ENCODE measurements at regions of chr15 and their contacts with region 1.

Region 1: DNA sequence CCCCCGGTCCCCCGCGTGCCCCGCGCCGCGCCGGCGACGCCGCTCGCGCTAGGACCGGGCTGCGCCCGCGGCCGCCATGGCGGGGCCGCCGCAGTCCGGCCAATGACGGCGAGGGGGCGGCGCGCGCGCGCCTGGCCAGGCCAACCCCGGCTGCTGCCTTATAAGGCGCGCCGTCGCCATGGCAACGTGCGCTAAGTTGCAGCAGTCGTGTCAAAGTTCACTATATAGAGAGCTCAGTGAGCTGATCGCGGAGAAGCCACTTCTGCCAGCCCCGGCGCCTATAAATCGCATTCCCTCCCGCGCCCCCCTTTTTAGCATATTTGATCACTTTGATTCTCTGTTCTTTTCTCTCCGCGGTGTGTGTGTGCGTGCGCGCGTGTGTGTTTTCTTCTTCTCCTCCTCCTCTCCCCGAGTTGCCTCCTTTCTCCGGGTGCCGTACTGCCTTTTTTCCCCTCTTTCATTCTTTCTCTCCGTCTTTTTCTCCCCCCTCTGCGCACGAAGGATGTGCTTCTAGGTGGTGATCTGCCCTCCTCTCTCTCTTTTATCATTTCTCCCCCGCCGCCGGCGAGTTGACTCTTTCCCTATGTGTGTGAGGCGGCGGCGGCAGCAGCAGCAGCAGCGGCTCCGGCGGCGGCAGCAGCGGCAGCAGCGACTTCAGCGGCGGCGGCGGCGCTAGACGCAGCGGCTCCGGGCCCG is at the start of gene NR2F2:
- DNase-seq: peak; percentile 99
- ATAC-seq: peak; percentile 78
- H3K4me3 ChIP-seq: peak within 1 kb of the TSS; percentile 84
- H3K27ac ChIP-seq: peak within 1 kb of the TSS; percentile 98
- H3K4me1 ChIP-seq: peaks cover 3% of the 10 kb centered on the region
- H3K27me3 ChIP-seq: no peaks in the 10 kb centered on the region
- CTCF ChIP-seq: no peak
- POLR2A ChIP-seq: peak; percentile 88
- RAD21 ChIP-seq: no peak; the same call in 1 of the 2 replicates
- total RNA-seq, gene NR2F2: 20.3 and 28.1 TPM in 2 replicates

Region 2: GRCh38 chr15:95284933-95285421 is 1045.6 kb before region 1 on chr15:
- CTCF ChIA-PET with region 1: no interaction called
- POLR2A ChIA-PET with region 1: no interaction called
- dilution Hi-C with region 1: no loop called
- in situ Hi-C with region 1: loop called (anchors 10 kb)
- intact Hi-C with region 1: loop called (anchors 1 kb)
- DNase-seq: peak; percentile 70
- ATAC-seq: peak; percentile 24
- H3K4me3 ChIP-seq: no peak overlapping the region
- H3K27ac ChIP-seq: peak overlapping the region; percentile 49; the same call in 1 of the 2 replicates
- H3K4me1 ChIP-seq: peaks cover 15% of the 10 kb centered on the region
- H3K27me3 ChIP-seq: no peaks in the 10 kb centered on the region
- CTCF ChIP-seq: peak; percentile 33
- POLR2A ChIP-seq: no peak
- RAD21 ChIP-seq: peak; percentile 41

Region 3: DNA sequence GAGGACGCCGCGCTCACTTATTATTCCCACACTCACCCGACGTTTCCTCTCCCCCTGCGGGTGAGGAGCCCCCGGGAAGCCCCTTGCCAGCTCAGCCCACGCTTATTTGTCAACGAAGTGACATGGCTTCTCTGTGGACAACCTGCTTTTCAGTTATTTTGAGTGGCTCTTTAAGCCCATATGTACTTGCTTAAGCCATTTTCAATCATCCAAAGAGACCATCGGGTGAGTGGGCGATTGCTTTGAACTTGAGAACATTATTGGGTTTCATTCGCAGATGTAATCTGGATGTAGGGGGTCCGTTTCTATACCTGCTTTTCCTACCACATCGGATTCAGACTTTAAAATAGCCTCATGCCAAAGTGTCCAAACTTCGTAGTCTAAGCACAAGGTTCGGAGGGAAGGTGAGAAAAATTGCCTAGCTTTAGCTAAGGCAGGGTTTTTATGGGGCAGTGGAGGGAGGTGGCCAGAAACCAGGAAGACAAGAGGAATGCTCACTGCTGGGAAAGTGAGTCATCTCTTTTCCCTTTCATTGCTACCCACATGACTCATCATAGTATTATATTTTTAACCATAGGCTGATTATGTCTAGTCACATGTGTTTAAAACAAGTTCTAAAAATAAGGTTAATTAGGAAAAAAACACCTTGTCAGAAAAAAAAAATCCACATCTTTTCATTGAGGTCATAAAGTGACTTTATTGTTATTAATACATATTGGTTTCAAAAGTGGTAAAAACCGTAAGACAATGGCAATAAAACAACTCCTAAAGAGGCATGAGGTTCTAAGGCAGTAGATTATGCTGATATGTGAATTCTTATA is 773.2 kb before region 1 on chr15:
- CTCF ChIA-PET with region 1: no interaction called
- POLR2A ChIA-PET with region 1: no interaction called
- dilution Hi-C with region 1: no loop called
- in situ Hi-C with region 1: loop called (anchors 25 kb)
- intact Hi-C with region 1: loop called (anchors 5 kb)
- DNase-seq: peak; percentile 95
- ATAC-seq: peak; percentile 83
- H3K4me3 ChIP-seq: no peak overlapping the region
- H3K27ac ChIP-seq: peak overlapping the region; percentile 70
- H3K4me1 ChIP-seq: peaks cover 13% of the 10 kb centered on the region
- H3K27me3 ChIP-seq: no peaks in the 10 kb centered on the region
- CTCF ChIP-seq: no peak
- POLR2A ChIP-seq: 0 out of 2 replicates have a peak, but pooled peaks have one; percentile 24
- RAD21 ChIP-seq: no peak

Region 4: GRCh38 chr15:95857124-95857757 is 473.4 kb before region 1 on chr15:
- CTCF ChIA-PET with region 1: interaction called, 3 read pairs
- POLR2A ChIA-PET with region 1: no interaction called
- dilution Hi-C with region 1: no loop called
- in situ Hi-C with region 1: no loop called
- intact Hi-C with region 1: loop called (anchors 10 kb)
- DNase-seq: peak; percentile 90
- ATAC-seq: peak; percentile 93
- H3K4me3 ChIP-seq: no peak overlapping the region
- H3K27ac ChIP-seq: no peak overlapping the region
- H3K4me1 ChIP-seq: peaks cover 3% of the 10 kb centered on the region; the same call in 1 of the 2 replicates
- H3K27me3 ChIP-seq: no peaks in the 10 kb centered on the region
- CTCF ChIP-seq: no peak
- POLR2A ChIP-seq: no peak
- RAD21 ChIP-seq: no peak

Region 5: GRCh38 chr15:95988351-95988805 is 342.2 kb before region 1 on chr15:
- CTCF ChIA-PET with region 1: no interaction called
- POLR2A ChIA-PET with region 1: no interaction called
- dilution Hi-C with region 1: no loop called
- in situ Hi-C with region 1: no loop called
- intact Hi-C with region 1: loop called (anchors 5 kb)
- DNase-seq: peak; percentile 50
- ATAC-seq: peak; percentile 79
- H3K4me3 ChIP-seq: no peak overlapping the region
- H3K27ac ChIP-seq: peak overlapping the region; percentile 68; the same call in 1 of the 2 replicates
- H3K4me1 ChIP-seq: peaks cover 5% of the 10 kb centered on the region
- H3K27me3 ChIP-seq: no peaks in the 10 kb centered on the region; the same call in 1 of the 2 replicates
- CTCF ChIP-seq: no peak
- POLR2A ChIP-seq: no peak
- RAD21 ChIP-seq: no peak

Region 6: GRCh38 chr15:96115642-96116041 is 215.0 kb before region 1 on chr15:
- CTCF ChIA-PET with region 1: no interaction called
- POLR2A ChIA-PET with region 1: no interaction called
- dilution Hi-C with region 1: no loop called
- in situ Hi-C with region 1: no loop called
- intact Hi-C with region 1: no loop called
- DNase-seq: peak; percentile 75
- ATAC-seq: peak; percentile 98
- H3K4me3 ChIP-seq: no peak overlapping the region
- H3K27ac ChIP-seq: no peak overlapping the region
- H3K4me1 ChIP-seq: no peaks in the 10 kb centered on the region
- H3K27me3 ChIP-seq: no peaks in the 10 kb centered on the region
- CTCF ChIP-seq: no peak
- POLR2A ChIP-seq: no peak
- RAD21 ChIP-seq: no peak

Region 7: GRCh38 chr15:96181873-96182301 is 148.7 kb before region 1 on chr15:
- CTCF ChIA-PET with region 1: no interaction called
- POLR2A ChIA-PET with region 1: no interaction called
- dilution Hi-C with region 1: no loop called
- in situ Hi-C with region 1: no loop called
- intact Hi-C with region 1: loop called (anchors 5 kb)
- DNase-seq: peak; percentile 88
- ATAC-seq: peak; percentile 80
- H3K4me3 ChIP-seq: no peak overlapping the region
- H3K27ac ChIP-seq: peak overlapping the region; percentile 80; the same call in 1 of the 2 replicates
- H3K4me1 ChIP-seq: peaks cover 8% of the 10 kb centered on the region
- H3K27me3 ChIP-seq: no peaks in the 10 kb centered on the region
- CTCF ChIP-seq: no peak
- POLR2A ChIP-seq: no peak
- RAD21 ChIP-seq: no peak

Region 8: DNA sequence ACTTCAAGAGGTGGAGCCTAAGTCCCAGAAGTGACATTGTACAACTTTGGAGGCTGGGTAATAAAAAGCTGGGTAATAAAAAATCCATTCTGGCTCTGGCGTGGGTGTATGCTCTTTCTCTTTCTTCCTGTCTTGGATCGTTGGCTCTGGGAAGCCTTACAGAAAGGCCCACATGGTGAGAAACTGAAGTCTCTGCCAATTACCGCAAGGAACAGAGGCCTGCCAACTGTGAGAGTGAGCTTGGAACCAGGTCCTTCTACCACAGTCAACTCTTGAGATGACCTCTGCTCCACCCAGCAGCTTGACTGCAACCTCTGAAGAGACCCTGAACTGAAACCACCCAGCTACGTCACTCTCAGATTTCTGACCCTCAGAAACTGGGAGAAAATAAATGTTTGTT is 50.9 kb after region 1 on chr15:
- CTCF ChIA-PET with region 1: no interaction called
- POLR2A ChIA-PET with region 1: no interaction called
- dilution Hi-C with region 1: no loop called
- in situ Hi-C with region 1: no loop called
- intact Hi-C with region 1: no loop called
- DNase-seq: no peak
- ATAC-seq: no peak
- H3K4me3 ChIP-seq: no peak overlapping the region
- H3K27ac ChIP-seq: no peak overlapping the region
- H3K4me1 ChIP-seq: no peaks in the 10 kb centered on the region
- H3K27me3 ChIP-seq: no peaks in the 10 kb centered on the region; the same call in 1 of the 2 replicates
- CTCF ChIP-seq: no peak
- POLR2A ChIP-seq: no peak
- RAD21 ChIP-seq: no peak

Region 9: GRCh38 chr15:96416934-96417759 is 86.5 kb after region 1 on chr15:
- CTCF ChIA-PET with region 1: no interaction called
- POLR2A ChIA-PET with region 1: no interaction called
- dilution Hi-C with region 1: no loop called
- in situ Hi-C with region 1: no loop called
- intact Hi-C with region 1: no loop called
- DNase-seq: peak; percentile 4
- ATAC-seq: peak; percentile 44
- H3K4me3 ChIP-seq: peak overlapping the region; percentile 30
- H3K27ac ChIP-seq: no peak overlapping the region
- H3K4me1 ChIP-seq: peaks cover 2% of the 10 kb centered on the region; the same call in 1 of the 2 replicates
- H3K27me3 ChIP-seq: peaks cover 86% of the 10 kb centered on the region
- CTCF ChIP-seq: no peak
- POLR2A ChIP-seq: no peak
- RAD21 ChIP-seq: no peak

Region 10: GRCh38 chr15:96544162-96544756 is 213.7 kb after region 1 on chr15:
- CTCF ChIA-PET with region 1: no interaction called
- POLR2A ChIA-PET with region 1: no interaction called
- dilution Hi-C with region 1: no loop called
- in situ Hi-C with region 1: no loop called
- intact Hi-C with region 1: no loop called
- DNase-seq: no peak
- ATAC-seq: no peak
- H3K4me3 ChIP-seq: no peak overlapping the region
- H3K27ac ChIP-seq: no peak overlapping the region
- H3K4me1 ChIP-seq: no peaks in the 10 kb centered on the region
- H3K27me3 ChIP-seq: no peaks in the 10 kb centered on the region
- CTCF ChIP-seq: no peak
- POLR2A ChIP-seq: no peak
- RAD21 ChIP-seq: no peak

Region 11: DNA sequence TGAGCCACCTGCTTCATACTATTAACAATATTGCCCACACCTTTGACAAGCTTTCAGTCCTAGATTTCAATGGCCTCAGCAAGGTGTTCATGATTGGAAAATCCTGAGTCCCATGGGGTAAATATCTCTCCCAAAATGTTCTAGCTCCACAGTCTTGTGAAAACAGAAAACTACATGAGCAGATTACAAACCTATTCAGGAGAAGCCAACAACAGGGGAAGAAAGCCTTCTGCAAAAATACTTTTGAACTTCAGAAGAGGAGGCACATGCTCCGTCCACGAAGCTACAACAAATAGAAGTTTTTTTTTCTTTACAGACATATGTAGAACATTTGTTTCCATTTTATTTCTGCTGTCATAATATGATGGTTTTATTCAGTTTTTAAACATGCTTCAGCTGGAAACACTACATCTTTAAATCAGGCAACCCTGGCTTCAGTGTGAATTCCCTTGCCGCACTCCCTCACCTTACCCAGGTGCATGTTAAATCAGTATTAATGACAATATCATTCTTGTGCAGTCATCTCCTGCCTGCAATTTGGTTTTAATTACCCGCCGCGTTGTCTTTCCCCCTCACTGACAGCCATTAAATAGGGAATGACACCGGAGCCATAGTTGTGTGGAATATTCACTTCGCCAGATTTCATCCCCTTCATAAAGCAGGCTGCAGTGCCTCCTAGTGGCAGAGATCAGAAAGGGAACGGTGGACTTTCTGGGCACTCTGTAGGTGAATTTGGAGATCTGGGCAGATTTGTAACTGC is 904.4 kb after region 1 on chr15:
- CTCF ChIA-PET with region 1: interaction called, 3 read pairs
- POLR2A ChIA-PET with region 1: no interaction called
- dilution Hi-C with region 1: no loop called
- in situ Hi-C with region 1: no loop called
- intact Hi-C with region 1: loop called (anchors 1 kb)
- DNase-seq: peak; percentile 39
- ATAC-seq: peak; percentile 88
- H3K4me3 ChIP-seq: no peak overlapping the region
- H3K27ac ChIP-seq: no peak overlapping the region
- H3K4me1 ChIP-seq: no peaks in the 10 kb centered on the region
- H3K27me3 ChIP-seq: no peaks in the 10 kb centered on the region
- CTCF ChIP-seq: peak; percentile 78
- POLR2A ChIP-seq: no peak
- RAD21 ChIP-seq: peak; percentile 86